Activated B cell treated with CpG ODN at 0.5 μM for 24 hours (primary cell): ENCODE measurements at regions of chr20 and their contacts with region 1.

Region 1: GRCh38 chr20:37527638-37528441 is at the start of gene BLCAP:
- DNase-seq: peak; percentile 87
- ATAC-seq: peak; percentile 87
- H3K4me3 Mint-ChIP-seq: peak within 1 kb of the TSS; percentile 93
- H3K27ac Mint-ChIP-seq: peak within 1 kb of the TSS; percentile 100
- H3K4me1 Mint-ChIP-seq: peaks cover 54% of the 10 kb centered on the region
- H3K27me3 Mint-ChIP-seq: no peaks in the 10 kb centered on the region
- CTCF ChIP-seq: no peak
- total RNA-seq, gene BLCAP: 70.3 and 78.0 TPM in 2 replicates

Region 2: DNA sequence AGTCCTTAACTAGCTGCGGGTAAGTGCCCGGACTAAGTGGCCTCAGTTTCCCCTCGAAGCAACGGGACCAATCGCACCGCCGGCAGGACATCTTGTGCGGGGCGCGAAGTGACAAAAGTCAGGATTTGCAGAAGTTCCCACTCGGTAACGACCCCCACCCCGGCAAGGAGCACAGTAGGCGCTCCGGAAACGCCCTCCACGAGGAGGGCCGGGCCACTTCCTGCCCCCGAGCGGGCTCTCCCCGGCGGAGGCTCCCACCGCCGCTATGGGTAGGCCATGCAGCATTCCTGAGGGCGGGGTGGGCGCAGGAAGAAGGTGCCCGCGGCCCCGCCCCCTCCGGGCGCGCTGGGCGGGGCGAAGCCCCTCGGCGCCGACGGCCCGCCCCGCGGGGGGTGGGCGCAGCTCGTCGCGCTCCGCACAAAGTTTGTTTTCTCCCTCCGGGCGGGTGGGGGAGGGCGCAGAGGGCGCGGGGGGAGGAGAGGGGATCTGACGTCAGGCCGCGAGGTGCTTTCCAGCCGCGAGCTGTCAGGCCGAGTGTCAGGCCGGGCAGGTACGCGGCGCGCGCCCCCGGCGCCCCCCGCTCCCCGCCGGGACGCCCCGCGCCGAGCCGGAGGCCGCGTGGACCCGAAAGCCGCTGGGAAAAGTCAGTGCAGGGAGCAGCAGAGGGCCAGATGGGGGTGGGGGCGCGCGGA is 954.6 kb before region 1 on chr20 and contains the start of gene TGIF2:
- CTCF ChIA-PET with region 1: no interaction called
- POLR2A ChIA-PET with region 1: interaction called, 15 read pairs
- intact Hi-C with region 1: no loop called
- DNase-seq: peak; percentile 92
- ATAC-seq: peak; percentile 77
- H3K4me3 Mint-ChIP-seq: peak within 1 kb of the TSS; percentile 90
- H3K27ac Mint-ChIP-seq: peak within 1 kb of the TSS; percentile 91
- H3K4me1 Mint-ChIP-seq: peaks cover 36% of the 10 kb centered on the region
- H3K27me3 Mint-ChIP-seq: no peaks in the 10 kb centered on the region
- CTCF ChIP-seq: no peak
- total RNA-seq, gene TGIF2: 40.8 and 43.8 TPM in 2 replicates

Region 3: GRCh38 chr20:37270576-37271420 is 257.0 kb before region 1 on chr20:
- CTCF ChIA-PET with region 1: interaction called, 42 read pairs
- POLR2A ChIA-PET with region 1: interaction called, 13 read pairs
- intact Hi-C with region 1: loop called (anchors 1 kb)
- DNase-seq: peak; percentile 20
- ATAC-seq: peak; percentile 74
- H3K4me3 Mint-ChIP-seq: peak overlapping the region; percentile 11
- H3K27ac Mint-ChIP-seq: peak overlapping the region; percentile 72
- H3K4me1 Mint-ChIP-seq: peaks cover 52% of the 10 kb centered on the region
- H3K27me3 Mint-ChIP-seq: no peaks in the 10 kb centered on the region
- CTCF ChIP-seq: no peak

Region 4: DNA sequence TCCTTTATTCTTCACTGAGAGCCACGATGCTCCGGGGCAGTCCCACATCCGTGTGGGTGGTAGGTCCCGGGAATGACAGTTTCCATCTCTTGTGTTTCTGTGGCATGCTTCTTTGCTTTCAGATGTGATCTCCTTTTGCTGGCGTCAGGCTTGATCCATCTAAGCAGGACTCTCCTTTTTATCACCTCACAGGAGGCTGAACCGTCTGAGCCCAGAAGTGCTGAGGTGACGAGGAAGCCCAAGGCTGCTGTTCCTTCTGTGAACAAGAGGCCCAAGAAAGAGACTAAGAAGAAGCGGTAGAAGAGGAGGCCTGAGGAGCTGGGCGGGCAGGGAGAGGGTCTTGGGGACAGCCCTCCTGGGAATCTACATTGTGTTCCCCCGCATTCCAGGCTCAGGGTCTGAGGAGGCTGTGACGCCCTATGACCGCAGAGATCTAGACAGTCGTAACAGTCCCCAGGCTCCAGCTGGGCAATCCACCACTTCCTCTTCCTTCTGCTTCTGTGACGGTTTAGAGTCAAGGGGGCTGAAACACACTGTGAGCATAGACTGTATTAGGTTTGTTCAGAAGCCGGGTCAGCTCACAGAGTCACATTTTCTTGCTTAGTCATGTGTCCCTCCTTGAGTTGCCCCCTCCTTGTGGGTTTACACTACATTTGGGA is 211.6 kb before region 1 on chr20:
- CTCF ChIA-PET with region 1: no interaction called
- POLR2A ChIA-PET with region 1: interaction called, 10 read pairs
- intact Hi-C with region 1: no loop called
- DNase-seq: peak; percentile 62
- ATAC-seq: peak; percentile 90
- H3K4me3 Mint-ChIP-seq: peak overlapping the region; percentile 59
- H3K27ac Mint-ChIP-seq: peak overlapping the region; percentile 92
- H3K4me1 Mint-ChIP-seq: peaks cover 56% of the 10 kb centered on the region
- H3K27me3 Mint-ChIP-seq: no peaks in the 10 kb centered on the region
- CTCF ChIP-seq: no peak

Region 5: DNA sequence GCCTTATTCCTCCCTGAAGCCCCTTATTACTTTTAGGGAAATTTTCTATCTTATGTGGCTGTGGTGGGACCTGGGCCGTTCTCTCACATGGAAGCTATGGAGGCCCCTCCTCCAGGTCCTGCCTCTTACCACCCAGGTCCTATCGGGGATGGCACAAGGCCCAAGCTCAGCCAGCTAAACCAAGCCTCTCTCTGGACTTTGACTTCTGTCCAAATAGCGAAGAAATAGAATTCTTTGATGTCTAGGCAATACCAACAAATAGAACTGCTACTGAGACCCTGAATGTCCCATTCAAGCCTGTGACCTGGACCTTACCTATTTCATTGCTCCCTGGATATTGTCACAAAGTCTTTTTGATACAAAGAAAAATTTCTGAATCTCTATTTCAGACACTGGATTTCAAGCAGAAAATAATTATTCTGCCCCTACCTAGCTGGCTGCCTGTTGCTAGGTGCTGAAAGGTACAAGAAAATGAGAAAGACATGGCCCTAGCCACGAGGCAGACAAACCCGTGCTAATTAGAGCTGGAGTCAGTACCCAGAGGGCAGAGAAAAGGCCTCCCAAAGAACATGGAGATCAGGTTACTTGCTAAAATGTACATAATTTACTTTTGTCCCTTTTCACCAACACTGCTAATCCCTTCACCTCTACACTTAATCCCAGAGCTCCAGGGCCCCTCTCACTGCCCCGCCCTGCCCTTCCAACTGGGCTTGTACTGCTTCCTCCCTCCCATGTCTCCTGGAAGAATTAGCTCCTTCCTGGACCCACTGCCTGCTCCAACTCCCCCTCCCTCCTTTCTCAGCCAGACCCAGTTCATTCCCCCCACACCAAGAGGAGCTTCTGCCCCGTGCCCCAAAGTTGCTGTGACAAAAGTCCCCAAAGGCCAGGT is 22.3 kb before region 1 on chr20:
- CTCF ChIA-PET with region 1: no interaction called
- POLR2A ChIA-PET with region 1: no interaction called
- intact Hi-C with region 1: loop called (anchors 2 kb)
- DNase-seq: no peak
- ATAC-seq: no peak
- H3K4me3 Mint-ChIP-seq: no peak overlapping the region
- H3K27ac Mint-ChIP-seq: no peak overlapping the region
- H3K4me1 Mint-ChIP-seq: peaks cover 8% of the 10 kb centered on the region
- H3K27me3 Mint-ChIP-seq: no peaks in the 10 kb centered on the region
- CTCF ChIP-seq: no peak

Region 6: DNA sequence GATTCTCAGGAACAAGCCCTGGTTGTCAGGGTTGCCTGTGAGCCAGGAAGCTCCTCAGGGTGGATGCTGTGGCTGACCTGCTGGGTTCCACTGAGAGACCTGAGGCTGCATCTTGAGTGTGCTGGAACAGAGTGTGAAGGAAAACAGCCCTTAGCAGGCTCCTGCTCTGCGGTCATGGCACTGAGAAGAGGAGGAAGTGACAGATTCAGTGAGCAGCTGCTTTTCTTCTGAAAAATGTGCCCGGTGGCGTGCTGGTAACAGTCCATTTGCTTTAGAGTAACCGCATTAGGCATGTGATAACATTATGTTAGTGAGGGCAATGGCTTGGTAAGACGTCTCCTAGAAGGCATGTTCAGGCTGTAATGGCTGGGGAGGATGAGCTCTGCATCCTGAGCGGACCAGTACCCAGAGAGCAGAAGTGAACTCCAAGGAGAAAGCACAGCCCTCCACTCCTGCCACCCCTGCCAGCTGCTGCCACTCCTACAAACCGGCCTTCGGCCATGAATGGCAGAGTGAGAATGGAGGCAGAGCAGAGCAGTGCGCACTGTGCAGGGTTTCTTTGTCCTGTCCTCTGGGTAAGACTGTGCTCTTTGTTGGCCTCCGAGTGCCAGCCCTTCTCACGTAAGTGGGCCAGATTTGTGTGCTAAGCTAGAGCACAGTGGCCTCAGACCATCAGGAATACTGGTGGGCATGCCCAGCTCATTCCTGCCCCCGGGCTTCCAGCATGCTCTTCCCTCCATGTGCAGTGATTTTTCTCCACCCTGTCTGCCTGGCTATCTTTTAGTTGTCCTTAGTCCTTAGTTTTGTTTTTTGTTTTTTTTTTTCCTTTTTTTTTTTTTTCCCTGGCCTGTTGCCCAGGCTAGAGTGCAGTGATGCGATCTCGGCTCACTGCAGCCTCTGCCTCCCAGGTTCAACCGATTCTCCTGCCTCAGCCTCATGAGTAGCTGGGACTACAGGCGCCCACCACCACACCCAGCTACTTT is 277.0 kb after region 1 on chr20:
- CTCF ChIA-PET with region 1: no interaction called
- POLR2A ChIA-PET with region 1: no interaction called
- intact Hi-C with region 1: loop called (anchors 1 kb)
- DNase-seq: peak; percentile 56
- ATAC-seq: peak; percentile 81
- H3K4me3 Mint-ChIP-seq: peak overlapping the region; percentile 79
- H3K27ac Mint-ChIP-seq: peak overlapping the region; percentile 97
- H3K4me1 Mint-ChIP-seq: peaks cover 1% of the 10 kb centered on the region
- H3K27me3 Mint-ChIP-seq: no peaks in the 10 kb centered on the region
- CTCF ChIP-seq: no peak